CD8-positive, alpha-beta T cell (primary cell): ENCODE measurements at regions of chr1 and their contacts with region 1.

Region 1: GRCh38 chr1:204398217-204399081 is 13.2 kb downstream of the PPP1R15B start:
- DNase-seq: peak; percentile 16 to 86 (median 54)
- ATAC-seq: peak; percentile 97
- H3K4me3 ChIP-seq: no peak overlapping the region
- H3K4me3 Mint-ChIP-seq: no peak overlapping the region
- H3K27ac ChIP-seq: peak overlapping the region in 1 of 2 experiments; percentile 21
- H3K27ac Mint-ChIP-seq: peak overlapping the region; percentile 80
- H3K4me1 ChIP-seq: peaks cover 4% of the 10 kb centered on the region
- H3K4me1 Mint-ChIP-seq: peaks cover 9% of the 10 kb centered on the region
- H3K27me3 ChIP-seq: no peaks in the 10 kb centered on the region
- H3K27me3 Mint-ChIP-seq: no peaks in the 10 kb centered on the region
- CTCF ChIP-seq: peak; percentile 87

Region 2: DNA sequence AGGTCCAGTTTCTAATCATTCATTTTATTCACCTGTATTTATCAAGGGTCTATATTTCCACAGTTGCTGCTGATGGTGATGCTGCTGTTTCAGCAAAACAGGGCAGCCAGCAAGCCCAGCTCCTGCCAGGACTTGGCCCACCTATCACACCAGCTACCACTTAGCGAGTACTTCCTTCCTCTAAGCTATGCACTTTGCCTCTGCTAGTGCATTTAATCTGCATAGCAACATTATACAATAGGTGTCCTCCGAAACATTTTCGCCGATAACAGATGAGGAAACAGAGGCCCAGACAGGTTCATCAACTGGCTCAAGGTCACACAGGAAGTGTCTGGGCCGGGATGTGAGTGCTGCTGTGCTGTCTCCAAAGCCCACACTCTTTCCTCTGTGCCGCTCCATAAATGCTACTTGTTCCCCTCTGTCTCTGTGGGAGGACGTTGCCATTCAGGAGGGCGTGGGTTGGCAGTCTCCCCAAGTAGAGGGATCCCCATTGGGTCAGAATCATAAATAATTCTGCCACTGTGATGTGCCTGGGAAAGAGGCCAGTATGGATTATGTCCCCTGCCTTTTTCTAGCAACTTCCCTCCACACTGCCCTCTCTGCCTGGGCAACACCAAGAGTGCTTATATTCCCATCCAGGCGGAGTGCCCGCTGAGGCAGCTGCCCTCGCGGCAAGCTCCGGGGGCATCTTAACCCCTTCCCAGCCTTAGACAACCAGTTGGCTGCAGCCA is 29.3 kb before region 1 on chr1:
- CTCF ChIA-PET with region 1: interaction called, 19 read pairs
- POLR2A ChIA-PET with region 1: interaction called, 3 read pairs
- intact Hi-C with region 1: no loop called
- DNase-seq: no peak
- ATAC-seq: no peak
- H3K4me3 ChIP-seq: no peak overlapping the region
- H3K4me3 Mint-ChIP-seq: no peak overlapping the region
- H3K27ac ChIP-seq: no peak overlapping the region
- H3K27ac Mint-ChIP-seq: no peak overlapping the region
- H3K4me1 ChIP-seq: peaks cover under 1% of the 10 kb centered on the region
- H3K4me1 Mint-ChIP-seq: peaks cover 5% of the 10 kb centered on the region
- H3K27me3 ChIP-seq: no peaks in the 10 kb centered on the region
- H3K27me3 Mint-ChIP-seq: no peaks in the 10 kb centered on the region
- CTCF ChIP-seq: no peak

Region 3: DNA sequence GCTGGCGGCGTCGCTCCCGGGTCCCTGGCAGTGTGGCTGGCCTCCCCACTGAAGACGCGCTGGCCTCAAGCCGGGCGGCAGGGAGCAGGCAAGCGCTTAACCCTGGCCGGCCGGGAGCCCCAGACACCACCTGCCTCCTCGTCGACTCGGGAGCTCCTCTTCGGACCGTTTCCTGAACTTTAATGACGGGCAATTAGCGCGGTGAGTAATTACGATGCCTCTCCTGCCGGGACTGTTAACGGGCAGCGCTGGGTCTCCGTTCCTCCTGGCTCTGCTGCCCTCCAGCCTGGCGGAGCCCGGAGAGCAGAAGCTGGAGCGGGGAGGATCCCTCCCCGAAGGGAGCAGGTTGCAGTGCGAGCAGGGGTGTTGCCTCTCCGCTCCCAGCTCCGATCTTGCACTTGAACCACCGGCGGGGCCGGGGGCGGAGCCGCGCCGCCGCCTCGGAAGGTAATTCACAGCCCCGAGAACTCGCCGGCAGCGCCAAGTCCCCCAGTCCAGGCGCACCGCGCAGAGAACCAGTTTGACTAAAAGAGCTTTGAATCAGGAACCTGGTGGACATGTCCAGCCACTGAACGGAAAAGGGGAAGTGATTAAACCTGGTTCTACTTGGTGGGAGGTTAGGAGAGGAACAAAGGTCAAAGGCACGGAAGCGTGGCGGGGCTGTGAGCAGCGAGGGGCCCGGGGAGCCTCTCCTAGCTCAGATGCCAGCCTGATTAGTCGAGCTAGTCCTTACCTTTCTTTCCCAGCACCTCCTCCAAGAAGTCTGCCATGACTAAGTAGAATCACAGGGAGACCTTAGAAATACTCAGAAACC is 20.4 kb before region 1 on chr1:
- CTCF ChIA-PET with region 1: interaction called, 39 read pairs
- POLR2A ChIA-PET with region 1: interaction called, 3 read pairs
- intact Hi-C with region 1: loop called in 1 of 2 experiments (anchors 2 kb)
- DNase-seq: peak in 8 of 9 experiments; percentile 35 to 76 (median 54)
- ATAC-seq: peak; percentile 60
- H3K4me3 ChIP-seq: peak overlapping the region; percentile 54 to 70
- H3K4me3 Mint-ChIP-seq: peak overlapping the region; percentile 91
- H3K27ac ChIP-seq: no peak overlapping the region
- H3K27ac Mint-ChIP-seq: no peak overlapping the region
- H3K4me1 ChIP-seq: peaks cover 13% of the 10 kb centered on the region
- H3K4me1 Mint-ChIP-seq: peaks cover 13% of the 10 kb centered on the region
- H3K27me3 ChIP-seq: peaks cover 5 to 14% of the 10 kb centered on the region in 2 experiments
- H3K27me3 Mint-ChIP-seq: peaks cover 11% of the 10 kb centered on the region
- CTCF ChIP-seq: no peak

Region 4: DNA sequence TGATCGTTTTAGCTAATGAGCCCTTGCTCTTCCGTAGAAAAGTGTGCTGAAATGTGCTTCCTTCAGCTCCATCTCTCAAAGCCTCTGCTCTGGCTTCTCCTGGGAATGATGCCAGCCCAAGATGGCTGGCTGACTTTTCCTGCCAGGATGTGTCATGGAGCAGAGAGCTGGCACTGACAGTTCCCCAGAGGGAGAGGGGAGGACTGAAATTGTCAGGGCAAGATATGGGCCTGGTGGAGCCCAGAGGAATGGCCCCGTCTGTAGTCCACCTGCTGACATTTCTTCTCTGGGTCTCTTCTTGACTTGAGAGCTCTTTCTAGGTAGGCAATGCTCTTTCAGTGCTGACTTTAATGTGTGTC is 13.5 kb before region 1 on chr1:
- CTCF ChIA-PET with region 1: interaction called, 39 read pairs
- POLR2A ChIA-PET with region 1: interaction called, 3 read pairs
- intact Hi-C with region 1: loop called in 1 of 2 experiments (anchors 2 kb)
- DNase-seq: no peak
- ATAC-seq: no peak
- H3K4me3 ChIP-seq: no peak overlapping the region
- H3K4me3 Mint-ChIP-seq: no peak overlapping the region
- H3K27ac ChIP-seq: no peak overlapping the region
- H3K27ac Mint-ChIP-seq: no peak overlapping the region
- H3K4me1 ChIP-seq: peaks cover 8% of the 10 kb centered on the region
- H3K4me1 Mint-ChIP-seq: peaks cover 4% of the 10 kb centered on the region
- H3K27me3 ChIP-seq: no peaks in the 10 kb centered on the region
- H3K27me3 Mint-ChIP-seq: no peaks in the 10 kb centered on the region
- CTCF ChIP-seq: no peak

Region 5: GRCh38 chr1:204791453-204792353 is 393.3 kb after region 1 on chr1:
- CTCF ChIA-PET with region 1: no interaction called
- POLR2A ChIA-PET with region 1: no interaction called
- intact Hi-C with region 1: no loop called
- DNase-seq: peak; percentile 63 to 88 (median 80)
- ATAC-seq: peak; percentile 88
- H3K4me3 ChIP-seq: no peak overlapping the region
- H3K4me3 Mint-ChIP-seq: no peak overlapping the region
- H3K27ac ChIP-seq: no peak overlapping the region
- H3K27ac Mint-ChIP-seq: no peak overlapping the region
- H3K4me1 ChIP-seq: no peaks in the 10 kb centered on the region
- H3K4me1 Mint-ChIP-seq: no peaks in the 10 kb centered on the region
- H3K27me3 ChIP-seq: peaks cover 0 to 2% of the 10 kb centered on the region in 2 experiments
- H3K27me3 Mint-ChIP-seq: peaks cover 26% of the 10 kb centered on the region
- CTCF ChIP-seq: peak; percentile 83